ENCODE measurements at regions of chr2 and their contacts with region 1.

Region 1: GRCh38 chr2:214809751-214810564 is 475 bp upstream of the BARD1 start:
- DNase-seq: peak; percentile 100
- ATAC-seq: peak; percentile 93
- H3K4me3 Mint-ChIP-seq: peak overlapping the region; percentile 72
- H3K27ac Mint-ChIP-seq: peak overlapping the region; percentile 93
- H3K4me1 Mint-ChIP-seq: peaks cover 53% of the 10 kb centered on the region
- H3K27me3 Mint-ChIP-seq: peaks cover 6% of the 10 kb centered on the region
- CTCF ChIP-seq: no peak

Region 2: GRCh38 chr2:214830794-214831346 is 20.9 kb after region 1 on chr2:
- CTCF ChIA-PET with region 1: interaction called, 21 read pairs
- POLR2A ChIA-PET with region 1: interaction called, 3 read pairs
- DNase-seq: no peak
- ATAC-seq: peak; percentile 99
- H3K4me3 Mint-ChIP-seq: no peak overlapping the region
- H3K27ac Mint-ChIP-seq: 0 out of 2 replicates have a peak overlapping the region, but pooled peaks have one; percentile 51
- H3K4me1 Mint-ChIP-seq: peaks cover 12% of the 10 kb centered on the region
- H3K27me3 Mint-ChIP-seq: no peaks in the 10 kb centered on the region; the same call in 1 of the 2 replicates
- CTCF ChIP-seq: no peak

Region 3: DNA sequence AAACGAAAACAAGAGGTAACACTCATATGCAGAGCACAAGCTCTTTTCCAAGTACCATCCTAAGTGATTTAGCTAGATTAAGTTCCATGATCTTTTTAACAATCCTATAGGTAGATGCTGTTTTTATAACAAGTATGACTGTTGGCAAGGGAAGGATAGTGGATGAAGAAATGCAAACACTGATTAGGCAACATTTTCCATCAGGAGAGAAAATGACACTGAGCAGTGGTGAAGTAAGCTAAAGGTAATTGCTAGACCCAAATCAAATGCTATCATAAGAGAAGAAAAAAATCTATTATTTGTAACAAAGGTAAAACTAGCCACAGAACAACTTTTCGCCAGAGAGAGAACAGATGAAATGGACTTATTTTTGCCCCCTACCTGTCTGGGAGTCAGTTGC is 33.9 kb after region 1 on chr2:
- CTCF ChIA-PET with region 1: no interaction called
- POLR2A ChIA-PET with region 1: no interaction called
- DNase-seq: no peak
- ATAC-seq: no peak
- H3K4me3 Mint-ChIP-seq: no peak overlapping the region
- H3K27ac Mint-ChIP-seq: no peak overlapping the region
- H3K4me1 Mint-ChIP-seq: peaks cover 11% of the 10 kb centered on the region
- H3K27me3 Mint-ChIP-seq: no peaks in the 10 kb centered on the region
- CTCF ChIP-seq: no peak

Region 4: DNA sequence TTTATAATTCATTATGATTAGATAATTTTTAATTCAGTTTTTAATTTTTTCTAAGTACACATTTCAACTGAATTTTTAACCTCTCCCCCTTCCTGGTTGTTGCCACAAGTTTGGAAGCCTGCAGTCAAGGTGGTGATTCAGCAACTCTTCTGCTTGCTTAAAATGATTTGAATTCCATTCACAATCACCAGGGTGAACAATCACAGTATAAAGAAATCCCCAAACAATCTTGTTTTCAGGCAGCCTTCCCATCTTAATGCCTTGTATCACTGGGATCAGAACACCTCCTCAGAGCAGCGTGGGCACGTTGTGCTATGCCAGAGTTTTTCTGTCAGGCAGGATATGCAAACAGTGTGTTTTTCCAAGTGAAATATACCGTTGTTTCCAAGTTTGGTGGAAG is 46.2 kb after region 1 on chr2:
- CTCF ChIA-PET with region 1: no interaction called
- POLR2A ChIA-PET with region 1: no interaction called
- DNase-seq: no peak
- ATAC-seq: 0 out of 2 replicates have a peak, but pooled peaks have one; percentile 28
- H3K4me3 Mint-ChIP-seq: no peak overlapping the region
- H3K27ac Mint-ChIP-seq: no peak overlapping the region
- H3K4me1 Mint-ChIP-seq: peaks cover 16% of the 10 kb centered on the region
- H3K27me3 Mint-ChIP-seq: no peaks in the 10 kb centered on the region
- CTCF ChIP-seq: no peak

Region 5: GRCh38 chr2:214881647-214882202 is 71.8 kb after region 1 on chr2:
- CTCF ChIA-PET with region 1: no interaction called
- POLR2A ChIA-PET with region 1: no interaction called
- DNase-seq: no peak
- ATAC-seq: no peak
- H3K4me3 Mint-ChIP-seq: no peak overlapping the region
- H3K27ac Mint-ChIP-seq: no peak overlapping the region
- H3K4me1 Mint-ChIP-seq: no peaks in the 10 kb centered on the region
- H3K27me3 Mint-ChIP-seq: no peaks in the 10 kb centered on the region
- CTCF ChIP-seq: no peak